ENCODE measurements at regions of chr14 and their contacts with region 1.

Region 1: DNA sequence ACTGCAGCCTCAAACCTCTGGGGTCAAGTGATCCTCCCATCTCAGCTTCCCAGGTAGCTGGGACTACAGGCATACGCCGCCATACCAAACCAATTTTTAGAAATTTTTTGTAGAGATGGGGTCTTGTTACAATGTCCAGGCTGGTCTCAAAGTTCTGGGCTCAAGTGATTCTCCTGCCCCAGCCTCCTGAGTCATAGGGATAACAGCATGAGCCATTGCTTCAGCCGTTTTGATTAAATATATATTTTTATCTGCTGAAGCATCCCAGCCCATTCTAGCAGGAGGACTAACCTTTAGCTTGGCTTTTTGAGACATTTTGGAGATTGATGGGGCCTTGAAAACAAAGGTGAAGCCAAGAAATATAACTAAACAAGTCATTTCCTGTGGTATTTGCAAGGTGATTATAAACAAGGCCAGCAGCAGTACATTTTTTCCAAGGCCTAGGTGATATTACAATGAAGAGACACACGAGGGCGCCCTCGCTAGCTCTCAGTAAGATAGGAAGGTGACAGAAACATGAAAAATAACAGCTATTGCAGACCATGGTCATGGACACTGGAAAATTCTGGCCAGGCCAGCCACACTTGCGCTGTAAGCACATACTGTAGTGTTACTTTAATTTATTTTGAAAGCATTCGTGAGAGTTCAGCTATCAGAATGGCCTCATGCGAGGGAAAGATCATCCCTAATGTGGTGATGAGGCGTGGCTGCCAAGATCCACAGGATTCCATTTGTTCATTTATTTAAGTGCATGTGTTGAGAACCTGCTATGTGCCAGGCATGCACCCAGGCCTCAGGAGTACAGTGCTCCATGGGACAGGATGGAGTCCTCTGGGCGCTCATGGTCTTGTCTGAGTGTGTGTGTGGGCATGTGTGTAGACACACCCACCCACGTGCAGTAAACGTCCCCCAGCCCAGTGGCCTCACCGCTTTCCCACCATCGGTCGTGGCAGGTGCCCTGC is 63.5 kb downstream of the DGLUCY start:
- DNase-seq: peak; percentile 84
- H3K4me3 ChIP-seq: no peak overlapping the region
- H3K27ac ChIP-seq: peak overlapping the region in 7 of 8 donors; percentile 24 to 78 (median 61)
- H3K4me1 ChIP-seq: peaks cover 5 to 26% (median 14%) of the 10 kb centered on the region in 6 donors
- H3K27me3 ChIP-seq: no peaks in the 10 kb centered on the region
- CTCF ChIP-seq: peak; percentile 68 to 88 (median 81)
- POLR2A ChIP-seq: no peak

Region 2: DNA sequence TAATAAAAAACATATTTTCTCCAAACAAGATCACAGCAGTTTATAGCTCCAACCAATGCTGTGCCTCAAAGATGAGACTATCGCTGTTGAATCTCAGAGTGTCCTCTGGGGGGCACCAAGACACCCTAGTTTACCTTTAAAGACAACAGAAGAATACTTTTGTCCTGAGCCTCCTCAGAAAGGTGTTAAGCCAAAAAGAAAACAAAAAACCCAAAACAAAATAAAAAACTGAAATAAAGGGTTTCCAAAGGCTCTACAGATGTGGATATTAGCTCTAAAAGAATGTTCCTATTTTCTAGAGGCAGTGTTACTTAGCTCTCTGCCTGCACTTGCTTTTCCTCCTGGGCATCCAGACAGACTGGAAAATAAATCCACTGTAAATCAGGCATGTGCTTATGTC is 274.3 kb before region 1 on chr14:
- intact Hi-C with region 1: loop called (anchors 5 kb)
- DNase-seq: no peak
- H3K4me3 ChIP-seq: no peak overlapping the region
- H3K27ac ChIP-seq: no peak overlapping the region
- H3K4me1 ChIP-seq: peaks cover 0 to 16% (median 1%) of the 10 kb centered on the region in 6 donors
- H3K27me3 ChIP-seq: no peaks in the 10 kb centered on the region
- CTCF ChIP-seq: peak; percentile 48 to 82 (median 73)
- POLR2A ChIP-seq: no peak

Region 3: GRCh38 chr14:91286530-91286937 is 109.2 kb after region 1 on chr14:
- intact Hi-C with region 1: loop called (anchors 2 kb)
- DNase-seq: peak; percentile 88
- H3K4me3 ChIP-seq: no peak overlapping the region
- H3K27ac ChIP-seq: peak overlapping the region in 1 of 8 donors; percentile 5
- H3K4me1 ChIP-seq: peaks cover 0 to 28% (median 5%) of the 10 kb centered on the region in 6 donors
- H3K27me3 ChIP-seq: no peaks in the 10 kb centered on the region
- CTCF ChIP-seq: peak; percentile 76 to 94 (median 90)
- POLR2A ChIP-seq: no peak

Region 4: DNA sequence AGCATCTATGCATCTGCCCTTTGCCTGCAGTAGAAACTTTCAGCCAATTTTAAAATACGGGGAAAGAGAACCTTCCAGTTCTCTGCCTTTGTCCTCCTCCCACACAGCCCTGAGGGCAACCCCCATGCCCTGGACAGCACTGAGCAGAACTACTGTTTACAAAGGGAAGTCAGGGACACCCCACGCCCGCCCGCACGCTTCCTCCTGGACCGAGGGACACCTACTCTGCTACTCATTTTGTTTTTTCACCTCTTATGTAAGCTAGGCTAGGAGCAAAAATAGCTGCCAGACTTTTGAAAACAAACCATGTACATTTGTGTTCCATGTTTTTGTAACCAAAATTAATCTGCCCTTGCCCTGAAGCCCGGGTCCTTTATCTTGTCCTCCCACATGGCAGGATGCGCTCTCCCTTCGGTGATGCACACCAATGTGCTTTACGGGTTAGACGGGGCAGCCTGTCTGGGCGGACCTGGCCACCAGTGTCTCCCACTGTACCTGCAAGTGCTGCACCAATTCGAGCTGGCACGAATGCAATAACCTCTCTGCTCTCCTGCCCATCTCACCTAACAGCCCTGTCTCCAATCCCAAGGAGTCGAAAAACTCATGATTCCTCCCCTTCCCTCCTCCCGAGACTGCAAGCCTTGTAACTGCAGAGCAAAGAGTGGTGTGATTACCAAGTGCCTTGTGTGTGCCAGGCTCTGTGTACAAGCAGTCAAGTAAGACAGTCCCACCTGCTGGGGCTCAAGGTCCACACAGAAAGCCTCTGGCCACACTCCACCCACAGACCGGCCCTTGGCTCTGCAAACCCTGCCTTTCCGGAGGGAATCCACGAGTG is 155.0 kb after region 1 on chr14:
- intact Hi-C with region 1: no loop called
- DNase-seq: peak; percentile 88
- H3K4me3 ChIP-seq: no peak overlapping the region
- H3K27ac ChIP-seq: peak overlapping the region in 5 of 8 donors; percentile 24 to 96 (median 58)
- H3K4me1 ChIP-seq: peaks cover 13 to 71% (median 45%) of the 10 kb centered on the region in 6 donors
- H3K27me3 ChIP-seq: no peaks in the 10 kb centered on the region
- CTCF ChIP-seq: no peak
- POLR2A ChIP-seq: no peak